ENCODE measurements at regions of chr13 and their contacts with region 1.

Region 1: GRCh38 chr13:114234645-114235421 is at the start of gene CDC16:
- DNase-seq: peak; percentile 79
- ATAC-seq: peak; percentile 85
- H3K4me3 Mint-ChIP-seq: peak within 1 kb of the TSS; percentile 86
- H3K27ac Mint-ChIP-seq: peak within 1 kb of the TSS; percentile 88
- H3K4me1 Mint-ChIP-seq: peaks cover 22% of the 10 kb centered on the region
- H3K27me3 Mint-ChIP-seq: peaks cover 10% of the 10 kb centered on the region
- CTCF ChIP-seq: no peak
- total RNA-seq, gene CDC16: 84.2 and 98.0 TPM in 2 replicates

Region 2: GRCh38 chr13:113816946-113817859 is 417.6 kb before region 1 on chr13:
- CTCF ChIA-PET with region 1: no interaction called
- POLR2A ChIA-PET with region 1: no interaction called
- intact Hi-C with region 1: loop called (anchors 2 kb)
- DNase-seq: peak; percentile 69
- ATAC-seq: peak; percentile 87
- H3K4me3 Mint-ChIP-seq: peak overlapping the region; percentile 98
- H3K27ac Mint-ChIP-seq: peak overlapping the region; percentile 70
- H3K4me1 Mint-ChIP-seq: peaks cover 24% of the 10 kb centered on the region
- H3K27me3 Mint-ChIP-seq: no peaks in the 10 kb centered on the region
- CTCF ChIP-seq: no peak

Region 3: DNA sequence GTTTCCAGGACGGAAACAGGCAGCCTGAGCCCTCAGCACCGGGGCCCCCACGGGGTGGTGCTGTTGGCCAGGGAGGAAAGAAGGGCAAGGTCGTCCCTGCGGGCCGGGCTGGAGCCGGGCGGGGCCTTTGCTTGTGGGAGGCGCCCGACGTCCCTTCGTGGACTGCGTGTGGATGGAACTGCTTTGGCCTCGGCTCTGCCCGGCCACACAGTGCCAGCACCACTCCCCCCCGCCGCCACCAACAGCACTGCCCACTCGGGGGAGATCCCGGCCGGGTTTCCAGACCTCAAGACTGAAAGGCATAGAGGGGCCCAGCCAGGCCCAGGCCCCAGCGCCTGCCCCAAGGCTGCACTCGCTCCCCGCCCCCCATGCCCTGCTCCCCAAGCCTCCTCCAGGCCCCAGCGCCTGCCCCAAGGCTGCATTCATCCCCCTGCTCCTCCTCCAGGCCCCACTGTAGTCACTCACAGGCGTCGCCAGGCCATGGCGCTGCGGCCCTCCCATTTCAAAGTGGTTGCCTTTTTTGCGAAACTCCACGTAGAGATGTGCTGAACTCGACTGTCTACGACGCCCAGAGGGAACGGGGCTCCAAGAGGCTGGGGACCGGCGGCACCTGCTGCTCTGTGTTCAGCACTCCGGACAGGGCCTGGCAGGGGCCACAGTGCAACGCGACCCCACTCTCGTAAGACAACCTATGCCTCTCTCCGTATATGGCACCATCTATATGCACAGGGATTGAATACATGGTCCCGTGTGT is 283.4 kb before region 1 on chr13:
- CTCF ChIA-PET with region 1: no interaction called
- POLR2A ChIA-PET with region 1: no interaction called
- intact Hi-C with region 1: loop called (anchors 2 kb)
- DNase-seq: peak; percentile 60
- ATAC-seq: peak; percentile 95
- H3K4me3 Mint-ChIP-seq: peak overlapping the region; percentile 32
- H3K27ac Mint-ChIP-seq: no peak overlapping the region
- H3K4me1 Mint-ChIP-seq: peaks cover 17% of the 10 kb centered on the region
- H3K27me3 Mint-ChIP-seq: no peaks in the 10 kb centered on the region
- CTCF ChIP-seq: peak; percentile 41

Region 4: DNA sequence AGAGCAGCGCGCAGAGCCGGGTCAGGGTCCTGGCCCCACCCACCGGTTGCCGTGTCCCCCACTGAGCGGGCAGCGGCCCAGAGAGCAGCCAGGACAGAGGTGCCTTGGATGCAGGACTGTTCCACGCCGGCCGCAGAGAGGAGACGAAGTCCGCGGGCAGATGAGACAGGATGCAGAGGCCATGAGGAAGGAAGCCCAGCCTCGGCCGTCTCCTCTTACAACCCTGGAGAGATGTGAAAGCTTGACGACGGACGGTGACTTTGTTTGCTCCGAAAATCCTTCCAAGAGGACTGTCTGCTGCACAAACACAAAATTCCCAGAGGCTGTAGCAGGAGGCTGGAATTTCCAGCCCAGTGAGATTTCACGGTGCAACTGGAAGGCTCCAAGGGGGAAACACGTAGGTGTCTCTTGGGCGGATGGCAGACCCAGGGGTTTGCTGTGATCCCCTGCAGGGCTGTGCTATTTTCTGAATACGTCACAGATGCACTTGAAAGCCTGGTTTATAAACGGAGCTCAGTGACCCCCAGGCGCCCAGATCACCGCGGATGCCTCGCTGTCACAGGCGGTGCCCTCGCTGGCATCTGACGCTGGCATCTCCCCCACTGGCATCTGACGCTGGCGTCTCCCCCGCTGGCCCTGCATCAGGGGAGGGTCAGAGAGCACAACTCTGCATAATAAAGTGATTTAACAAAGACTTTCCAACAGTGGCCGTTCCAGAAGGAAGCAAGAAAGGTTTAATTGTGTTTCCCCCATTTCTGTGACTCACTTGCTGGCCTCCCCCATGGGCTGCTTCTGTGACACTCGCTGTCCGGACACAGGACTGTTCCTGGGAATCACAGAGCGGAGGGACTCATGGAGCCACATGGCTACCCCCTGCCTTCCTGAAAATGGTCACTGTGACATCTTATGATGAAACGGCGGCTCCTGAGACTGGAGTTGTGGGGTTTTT is 199.0 kb before region 1 on chr13:
- CTCF ChIA-PET with region 1: no interaction called
- POLR2A ChIA-PET with region 1: no interaction called
- intact Hi-C with region 1: no loop called
- DNase-seq: no peak
- ATAC-seq: no peak
- H3K4me3 Mint-ChIP-seq: no peak overlapping the region
- H3K27ac Mint-ChIP-seq: no peak overlapping the region
- H3K4me1 Mint-ChIP-seq: peaks cover 2% of the 10 kb centered on the region
- H3K27me3 Mint-ChIP-seq: no peaks in the 10 kb centered on the region
- CTCF ChIP-seq: no peak

Region 5: GRCh38 chr13:114161644-114162532 is 72.9 kb before region 1 on chr13:
- CTCF ChIA-PET with region 1: no interaction called
- POLR2A ChIA-PET with region 1: no interaction called
- intact Hi-C with region 1: no loop called
- DNase-seq: no peak
- ATAC-seq: peak; percentile 72
- H3K4me3 Mint-ChIP-seq: peak overlapping the region; percentile 80
- H3K27ac Mint-ChIP-seq: peak overlapping the region; percentile 41
- H3K4me1 Mint-ChIP-seq: peaks cover 51% of the 10 kb centered on the region
- H3K27me3 Mint-ChIP-seq: peaks cover 13% of the 10 kb centered on the region
- CTCF ChIP-seq: no peak

Region 6: GRCh38 chr13:114219392-114219791 is 15.4 kb before region 1 on chr13:
- CTCF ChIA-PET with region 1: no interaction called
- POLR2A ChIA-PET with region 1: no interaction called
- intact Hi-C with region 1: no loop called
- DNase-seq: no peak
- ATAC-seq: no peak
- H3K4me3 Mint-ChIP-seq: no peak overlapping the region
- H3K27ac Mint-ChIP-seq: no peak overlapping the region
- H3K4me1 Mint-ChIP-seq: peaks cover 15% of the 10 kb centered on the region
- H3K27me3 Mint-ChIP-seq: peaks cover 10% of the 10 kb centered on the region
- CTCF ChIP-seq: no peak

Region 7: DNA sequence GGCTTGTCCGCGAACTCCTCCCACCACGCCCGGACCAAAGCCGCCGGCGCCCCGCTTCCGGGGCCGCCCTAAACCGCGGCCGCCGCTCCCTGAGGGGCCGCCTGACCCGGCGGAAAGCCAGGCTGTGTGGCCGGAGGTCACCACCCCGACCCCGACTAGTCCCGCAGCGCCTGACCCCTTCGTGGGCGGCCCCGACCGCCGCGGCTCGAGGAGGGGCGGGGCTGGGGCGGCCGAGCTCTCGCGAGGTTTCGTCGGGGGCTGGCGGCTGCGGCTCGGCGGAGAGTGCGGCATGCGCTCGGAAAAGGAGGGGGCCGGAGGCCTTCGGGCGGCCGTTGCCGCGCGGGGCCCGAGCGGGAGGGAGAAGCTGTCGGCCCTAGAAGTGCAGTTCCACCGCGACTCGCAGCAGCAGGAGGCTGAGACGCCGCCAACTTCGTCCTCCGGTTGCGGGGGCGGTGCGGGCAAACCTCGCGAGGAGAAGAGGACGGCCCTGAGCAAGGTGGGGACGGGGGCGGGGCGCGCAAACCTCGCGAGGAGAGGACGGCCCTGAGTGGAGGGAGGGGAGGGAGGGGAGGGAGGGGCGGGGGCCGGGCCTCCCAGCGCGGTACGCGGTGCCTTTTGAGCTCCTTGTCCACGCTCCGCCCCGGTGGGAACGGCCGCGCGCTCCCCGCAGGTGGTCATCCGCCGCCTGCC is 46.7 kb after region 1 on chr13 and contains the start of gene UPF3A:
- CTCF ChIA-PET with region 1: no interaction called
- POLR2A ChIA-PET with region 1: interaction called, 5 read pairs
- intact Hi-C with region 1: loop called (anchors 1 kb)
- DNase-seq: peak; percentile 95
- ATAC-seq: peak; percentile 80
- H3K4me3 Mint-ChIP-seq: peak within 1 kb of the TSS; percentile 91
- H3K27ac Mint-ChIP-seq: peak within 1 kb of the TSS; percentile 97
- H3K4me1 Mint-ChIP-seq: peaks cover 33% of the 10 kb centered on the region
- H3K27me3 Mint-ChIP-seq: no peaks in the 10 kb centered on the region
- CTCF ChIP-seq: no peak
- total RNA-seq, gene UPF3A: 68.3 and 83.2 TPM in 2 replicates

Region 8: GRCh38 chr13:114314074-114314912 is 79.5 kb after region 1 on chr13 and contains the start of gene CHAMP1:
- CTCF ChIA-PET with region 1: no interaction called
- POLR2A ChIA-PET with region 1: no interaction called
- intact Hi-C with region 1: loop called (anchors 1 kb)
- DNase-seq: peak; percentile 91
- ATAC-seq: peak; percentile 83
- H3K4me3 Mint-ChIP-seq: peak within 1 kb of the TSS; percentile 89
- H3K27ac Mint-ChIP-seq: peak within 1 kb of the TSS; percentile 94
- H3K4me1 Mint-ChIP-seq: peaks cover 53% of the 10 kb centered on the region
- H3K27me3 Mint-ChIP-seq: no peaks in the 10 kb centered on the region
- CTCF ChIP-seq: no peak
- total RNA-seq, gene CHAMP1: 30.4 and 34.8 TPM in 2 replicates